ENCODE measurements at regions of chr3 and their contacts with region 1.

Region 1: DNA sequence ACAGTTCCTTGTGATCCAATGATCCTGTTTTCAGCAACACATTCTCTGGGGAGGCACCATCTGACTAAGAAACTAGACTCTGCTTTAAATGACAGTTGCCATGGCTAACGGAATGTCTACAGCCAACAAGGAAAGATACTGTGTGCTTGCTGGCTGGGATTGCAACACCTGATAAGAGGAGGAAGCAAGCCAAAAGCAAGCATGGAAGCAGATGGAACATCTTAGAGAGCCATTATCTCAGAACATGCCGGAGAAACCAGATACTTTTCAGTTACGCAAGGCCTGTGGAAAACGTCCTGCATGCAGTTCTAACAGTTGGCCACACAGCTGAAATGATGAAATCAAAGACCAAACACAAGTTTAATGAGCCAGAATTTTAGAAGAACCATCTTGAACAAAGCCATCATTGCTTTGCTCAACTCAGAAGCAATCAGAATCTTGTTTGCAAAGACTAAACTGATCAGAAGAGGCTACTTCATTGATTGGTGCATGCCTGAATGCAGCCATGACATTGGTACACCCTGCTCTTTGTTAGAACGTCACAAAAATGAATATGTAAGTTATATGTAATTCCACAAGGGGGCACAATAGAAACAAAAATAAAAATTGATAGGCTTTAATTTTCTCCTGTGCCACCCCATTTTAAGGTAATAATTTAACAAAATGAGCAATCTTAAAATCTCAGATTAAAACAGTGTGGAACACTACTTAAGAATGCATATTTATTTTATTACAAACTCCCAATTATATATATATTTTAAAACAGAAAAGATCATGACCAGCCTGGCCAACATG is 50.8 kb downstream of the GXYLT2 start:
- DNase-seq: peak; percentile 38
- ATAC-seq: peak; percentile 97
- H3K4me3 Mint-ChIP-seq: no peak overlapping the region
- H3K27ac Mint-ChIP-seq: no peak overlapping the region
- H3K4me1 Mint-ChIP-seq: no peaks in the 10 kb centered on the region
- H3K27me3 Mint-ChIP-seq: no peaks in the 10 kb centered on the region
- CTCF ChIP-seq: peak; percentile 67

Region 2: DNA sequence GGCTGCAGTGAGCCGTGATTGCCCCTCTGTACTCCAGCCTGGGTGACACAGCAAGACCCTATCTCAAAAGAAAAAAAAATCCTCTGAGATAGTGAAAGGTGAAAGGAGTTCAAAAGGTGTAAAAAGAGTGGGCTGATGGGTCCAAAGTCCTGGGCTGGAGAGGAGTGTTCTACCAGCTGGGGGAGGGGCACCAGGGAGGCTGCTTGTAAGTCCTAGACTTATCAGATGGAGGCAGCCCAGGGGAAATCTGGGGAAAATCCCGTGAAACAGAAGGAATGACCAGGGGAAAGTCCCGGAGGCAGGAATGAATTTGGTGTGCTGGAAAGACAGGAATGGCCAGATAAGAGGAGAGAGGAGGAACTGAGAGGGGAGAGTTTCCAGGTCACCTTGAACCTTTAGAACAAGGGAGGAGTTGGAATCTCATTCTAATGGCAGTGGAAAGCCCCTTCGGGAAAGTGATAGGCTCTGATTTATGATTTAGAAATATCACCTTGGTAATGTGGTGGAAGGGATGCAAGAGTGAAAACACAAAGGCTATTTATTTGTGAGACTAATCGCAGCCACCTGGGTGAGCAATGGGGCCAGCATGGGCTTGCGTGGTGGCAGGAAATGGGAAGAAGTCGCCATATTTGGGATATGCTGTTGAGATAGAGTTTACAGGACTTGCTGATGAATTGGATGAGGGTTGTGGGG is 34.5 kb after region 1 on chr3:
- CTCF ChIA-PET with region 1: no interaction called
- POLR2A ChIA-PET with region 1: no interaction called
- intact Hi-C with region 1: no loop called
- DNase-seq: no peak
- ATAC-seq: no peak
- H3K4me3 Mint-ChIP-seq: no peak overlapping the region
- H3K27ac Mint-ChIP-seq: no peak overlapping the region
- H3K4me1 Mint-ChIP-seq: peaks cover 15% of the 10 kb centered on the region
- H3K27me3 Mint-ChIP-seq: peaks cover 2% of the 10 kb centered on the region
- CTCF ChIP-seq: no peak

Region 3: GRCh38 chr3:72996473-72997333 is 58.0 kb after region 1 on chr3 and contains the start of gene PPP4R2:
- CTCF ChIA-PET with region 1: interaction called, 11 read pairs
- POLR2A ChIA-PET with region 1: interaction called, 3 read pairs
- intact Hi-C with region 1: loop called (anchors 5 kb)
- DNase-seq: peak; percentile 91
- ATAC-seq: peak; percentile 89
- H3K4me3 Mint-ChIP-seq: peak within 1 kb of the TSS; percentile 88
- H3K27ac Mint-ChIP-seq: peak within 1 kb of the TSS; percentile 97
- H3K4me1 Mint-ChIP-seq: peaks cover 34% of the 10 kb centered on the region
- H3K27me3 Mint-ChIP-seq: no peaks in the 10 kb centered on the region
- CTCF ChIP-seq: no peak
- total RNA-seq, gene PPP4R2: 85.5 to 88.6 TPM

Region 4: DNA sequence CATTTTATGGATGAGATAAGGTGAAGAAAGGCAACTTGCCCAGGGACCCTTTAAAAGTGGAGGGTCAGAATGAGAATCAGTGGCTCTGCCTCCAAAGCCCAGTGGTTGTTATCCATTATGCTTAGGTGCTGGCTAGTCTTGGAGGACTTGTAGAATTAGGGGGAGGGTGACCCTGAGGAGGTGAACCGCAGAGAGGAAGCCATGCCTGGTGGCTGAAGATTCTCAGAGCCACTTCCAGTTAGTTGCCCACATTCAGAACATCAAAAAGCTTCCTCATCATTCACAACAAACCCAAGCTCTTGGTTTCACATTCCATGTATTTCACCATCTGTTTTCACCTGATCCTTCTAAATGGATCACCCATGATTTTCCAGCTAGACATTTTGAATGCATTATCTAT is 134.0 kb after region 1 on chr3:
- CTCF ChIA-PET with region 1: interaction called, 3 read pairs
- POLR2A ChIA-PET with region 1: no interaction called
- intact Hi-C with region 1: loop called (anchors 5 kb)
- DNase-seq: peak; percentile 14
- ATAC-seq: no peak
- H3K4me3 Mint-ChIP-seq: no peak overlapping the region
- H3K27ac Mint-ChIP-seq: no peak overlapping the region
- H3K4me1 Mint-ChIP-seq: peaks cover 32% of the 10 kb centered on the region
- H3K27me3 Mint-ChIP-seq: no peaks in the 10 kb centered on the region
- CTCF ChIP-seq: no peak

Region 5: DNA sequence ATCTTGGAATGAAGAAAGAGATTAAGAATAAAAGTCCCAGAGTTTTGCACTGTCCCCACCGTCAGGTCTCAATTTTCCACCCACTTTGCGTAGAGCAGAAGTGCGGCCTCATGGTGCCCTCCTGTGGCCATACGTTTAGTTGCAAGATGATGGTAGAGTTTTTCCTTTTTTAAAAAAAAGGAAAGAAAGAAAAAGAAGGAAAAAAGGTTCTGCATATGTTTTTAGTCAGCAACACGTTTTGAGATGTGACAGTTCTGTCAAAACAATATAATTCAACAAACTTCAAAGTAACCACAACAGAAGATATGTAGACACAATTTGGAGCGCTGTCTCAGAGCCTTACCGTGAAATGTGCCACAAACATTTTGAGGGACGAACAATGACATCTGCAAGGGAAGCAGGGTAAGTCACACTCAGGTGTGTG is 147.4 kb after region 1 on chr3:
- CTCF ChIA-PET with region 1: interaction called, 42 read pairs
- POLR2A ChIA-PET with region 1: no interaction called
- intact Hi-C with region 1: loop called (anchors 2 kb)
- DNase-seq: peak; percentile 64
- ATAC-seq: peak; percentile 67
- H3K4me3 Mint-ChIP-seq: no peak overlapping the region
- H3K27ac Mint-ChIP-seq: no peak overlapping the region
- H3K4me1 Mint-ChIP-seq: peaks cover 8% of the 10 kb centered on the region
- H3K27me3 Mint-ChIP-seq: no peaks in the 10 kb centered on the region
- CTCF ChIP-seq: peak; percentile 94